ENCODE measurements at regions of chr4 and their contacts with region 1.

Region 1: GRCh38 chr4:48578132-48578968 is 88.3 kb downstream of the ZAR1 start:
- DNase-seq: peak in 31 of 35 experiments; percentile 4 to 79 (median 31)
- ATAC-seq: peak; percentile 81 to 93 (median 88)
- H3K4me3 ChIP-seq: no peak overlapping the region
- H3K4me3 Mint-ChIP-seq: no peak overlapping the region
- H3K27ac ChIP-seq: no peak overlapping the region
- H3K27ac Mint-ChIP-seq: peak overlapping the region; percentile 34 to 85
- H3K4me1 ChIP-seq: no peaks in the 10 kb centered on the region
- H3K4me1 Mint-ChIP-seq: peaks cover 0 to 2% (median 0%) of the 10 kb centered on the region in 3 donors
- H3K27me3 ChIP-seq: no peaks in the 10 kb centered on the region
- H3K27me3 Mint-ChIP-seq: no peaks in the 10 kb centered on the region

Region 2: GRCh38 chr4:48594180-48594579 is 15.8 kb after region 1 on chr4:
- CTCF ChIA-PET with region 1: interaction called, 12 to 14 read pairs
- POLR2A ChIA-PET with region 1: no interaction called
- DNase-seq: no peak
- ATAC-seq: no peak
- H3K4me3 ChIP-seq: no peak overlapping the region
- H3K4me3 Mint-ChIP-seq: no peak overlapping the region
- H3K27ac ChIP-seq: no peak overlapping the region
- H3K27ac Mint-ChIP-seq: peak overlapping the region in 1 of 2 donors; percentile 7
- H3K4me1 ChIP-seq: no peaks in the 10 kb centered on the region
- H3K4me1 Mint-ChIP-seq: peaks cover 3 to 8% (median 3%) of the 10 kb centered on the region in 3 donors
- H3K27me3 ChIP-seq: no peaks in the 10 kb centered on the region
- H3K27me3 Mint-ChIP-seq: no peaks in the 10 kb centered on the region

Region 3: DNA sequence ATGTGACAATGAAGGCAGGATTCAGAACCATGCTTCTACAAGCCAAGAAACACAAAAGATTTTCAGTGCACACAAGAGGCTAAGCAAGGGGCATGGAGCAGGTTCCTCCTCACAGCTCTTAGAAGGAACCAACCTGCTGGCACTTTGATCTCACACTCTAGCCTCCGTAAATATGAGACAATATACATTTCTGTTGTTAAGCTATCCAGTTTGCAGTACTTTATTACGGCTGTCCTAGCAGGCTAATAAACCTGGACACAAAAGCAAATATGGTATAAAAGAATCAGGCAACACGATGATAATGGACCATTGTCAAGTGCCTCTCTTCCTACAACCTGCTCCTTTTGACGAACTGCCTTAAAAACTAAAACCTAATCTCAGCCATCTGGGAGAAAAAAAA is 26.2 kb after region 1 on chr4:
- CTCF ChIA-PET with region 1: no interaction called
- POLR2A ChIA-PET with region 1: no interaction called
- DNase-seq: no peak
- ATAC-seq: no peak
- H3K4me3 ChIP-seq: no peak overlapping the region
- H3K4me3 Mint-ChIP-seq: no peak overlapping the region
- H3K27ac ChIP-seq: no peak overlapping the region
- H3K27ac Mint-ChIP-seq: no peak overlapping the region
- H3K4me1 ChIP-seq: no peaks in the 10 kb centered on the region
- H3K4me1 Mint-ChIP-seq: peaks cover 0 to 3% (median 1%) of the 10 kb centered on the region in 3 donors
- H3K27me3 ChIP-seq: no peaks in the 10 kb centered on the region
- H3K27me3 Mint-ChIP-seq: no peaks in the 10 kb centered on the region

Region 4: DNA sequence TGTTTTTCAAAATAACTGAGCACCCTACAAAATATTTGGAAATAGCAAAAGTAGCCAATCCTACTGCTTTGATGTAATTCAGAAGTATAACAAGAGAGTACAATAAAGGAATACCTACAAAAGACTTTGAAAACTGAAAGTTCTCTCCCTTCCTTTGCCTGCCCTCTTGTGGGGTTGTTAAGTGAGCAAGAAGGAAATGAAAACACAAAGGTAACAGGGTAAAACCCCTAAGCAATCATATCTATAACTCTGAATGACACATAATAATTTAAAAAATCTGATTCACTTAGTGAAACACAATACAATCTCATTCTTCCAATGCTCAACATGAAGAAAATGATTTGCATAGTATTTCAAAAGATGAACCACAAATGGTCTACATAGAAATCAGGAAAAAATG is 103.5 kb after region 1 on chr4:
- CTCF ChIA-PET with region 1: interaction called, 5 to 26 read pairs
- POLR2A ChIA-PET with region 1: no interaction called
- DNase-seq: peak in 6 of 35 experiments; percentile 4 to 58 (median 8)
- ATAC-seq: peak; percentile 60 to 68 (median 64)
- H3K4me3 ChIP-seq: no peak overlapping the region
- H3K4me3 Mint-ChIP-seq: no peak overlapping the region
- H3K27ac ChIP-seq: no peak overlapping the region
- H3K27ac Mint-ChIP-seq: peak overlapping the region; percentile 38 to 78
- H3K4me1 ChIP-seq: peaks cover 0 to 4% of the 10 kb centered on the region in 2 experiments
- H3K4me1 Mint-ChIP-seq: peaks cover 40 to 45% (median 44%) of the 10 kb centered on the region in 3 donors
- H3K27me3 ChIP-seq: no peaks in the 10 kb centered on the region
- H3K27me3 Mint-ChIP-seq: no peaks in the 10 kb centered on the region

Region 5: GRCh38 chr4:48779998-48780742 is 201.8 kb after region 1 on chr4 and contains the start of gene FRYL:
- CTCF ChIA-PET with region 1: interaction called, 4 to 15 read pairs
- POLR2A ChIA-PET with region 1: no interaction called
- DNase-seq: peak; percentile 94 to 100 (median 97)
- ATAC-seq: peak; percentile 88 to 90 (median 88)
- H3K4me3 ChIP-seq: peak within 1 kb of the TSS; percentile 83 to 99
- H3K4me3 Mint-ChIP-seq: peak within 1 kb of the TSS; percentile 75 to 94 (median 90)
- H3K27ac ChIP-seq: peak within 1 kb of the TSS; percentile 69
- H3K27ac Mint-ChIP-seq: peak within 1 kb of the TSS; percentile 89 to 95
- H3K4me1 ChIP-seq: peaks cover 10 to 29% of the 10 kb centered on the region in 2 experiments
- H3K4me1 Mint-ChIP-seq: peaks cover 44 to 47% (median 45%) of the 10 kb centered on the region in 3 donors
- H3K27me3 ChIP-seq: no peaks in the 10 kb centered on the region
- H3K27me3 Mint-ChIP-seq: no peaks in the 10 kb centered on the region
- total RNA-seq, gene FRYL: 86.3 to 143 (median 111) TPM

Region 6: GRCh38 chr4:48906206-48907173 is 328.1 kb after region 1 on chr4 and contains the start of gene OCIAD2:
- CTCF ChIA-PET with region 1: interaction called, 3 to 27 read pairs
- POLR2A ChIA-PET with region 1: no interaction called
- DNase-seq: peak; percentile 71 to 90 (median 83)
- ATAC-seq: peak; percentile 95 to 99 (median 98)
- H3K4me3 ChIP-seq: peak within 1 kb of the TSS; percentile 64 to 86
- H3K4me3 Mint-ChIP-seq: peak within 1 kb of the TSS; percentile 91 to 96 (median 94)
- H3K27ac ChIP-seq: peak within 1 kb of the TSS; percentile 69
- H3K27ac Mint-ChIP-seq: peak within 1 kb of the TSS; percentile 89 to 95
- H3K4me1 ChIP-seq: peaks cover 19 to 34% of the 10 kb centered on the region in 2 experiments
- H3K4me1 Mint-ChIP-seq: peaks cover 50 to 52% (median 50%) of the 10 kb centered on the region in 3 donors
- H3K27me3 ChIP-seq: no peaks in the 10 kb centered on the region
- H3K27me3 Mint-ChIP-seq: no peaks in the 10 kb centered on the region
- total RNA-seq, gene OCIAD2: 54.0 to 150 (median 113) TPM

Region 7: GRCh38 chr4:48963042-48963679 is 384.8 kb after region 1 on chr4:
- CTCF ChIA-PET with region 1: interaction called, 11 to 58 read pairs
- POLR2A ChIA-PET with region 1: interaction called, 3 to 7 read pairs
- DNase-seq: peak; percentile 44 to 87 (median 68)
- ATAC-seq: peak; percentile 89 to 97 (median 94)
- H3K4me3 ChIP-seq: no peak overlapping the region
- H3K4me3 Mint-ChIP-seq: no peak overlapping the region
- H3K27ac ChIP-seq: no peak overlapping the region
- H3K27ac Mint-ChIP-seq: no peak overlapping the region
- H3K4me1 ChIP-seq: no peaks in the 10 kb centered on the region
- H3K4me1 Mint-ChIP-seq: peaks cover 3 to 9% (median 3%) of the 10 kb centered on the region in 3 donors
- H3K27me3 ChIP-seq: no peaks in the 10 kb centered on the region
- H3K27me3 Mint-ChIP-seq: peaks cover 0 to 2% of the 10 kb centered on the region in 2 donors

Measured in T-cell (primary cell).